Activated naive CD4-positive, alpha-beta T cell treated with anti-CD3 and anti-CD28 coated beads for 36 hours (primary cell): ENCODE measurements at regions of chr16 and their contacts with region 1.

Region 1: GRCh38 chr16:30957456-30958174 is at the start of gene SETD1A:
- DNase-seq: peak; percentile 99
- H3K4me3 Mint-ChIP-seq: peak within 1 kb of the TSS; percentile 93
- H3K27ac Mint-ChIP-seq: peak within 1 kb of the TSS; percentile 99
- H3K4me1 Mint-ChIP-seq: peaks cover 27% of the 10 kb centered on the region
- H3K27me3 Mint-ChIP-seq: no peaks in the 10 kb centered on the region
- total RNA-seq, gene SETD1A: 14.3 to 14.6 TPM

Region 2: DNA sequence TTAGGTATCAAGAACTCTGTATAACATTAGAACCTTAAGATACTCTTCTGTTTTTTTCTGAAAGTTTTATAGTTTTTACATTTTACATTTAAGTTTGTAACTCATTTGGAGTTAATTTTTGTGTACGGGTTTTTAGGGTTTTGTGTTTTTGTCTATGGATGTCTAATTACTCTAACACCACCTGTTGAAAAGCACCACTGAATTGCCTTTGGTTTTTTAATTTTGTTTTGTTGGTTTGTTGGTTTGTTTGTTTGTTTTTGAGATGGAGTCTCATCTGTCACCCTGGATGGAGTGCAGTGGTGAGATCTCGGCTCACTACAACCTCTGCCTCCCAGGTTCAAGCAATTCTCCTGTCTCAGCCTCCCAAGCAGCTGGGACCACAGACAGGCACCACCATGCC is 140.8 kb before region 1 on chr16:
- CTCF ChIA-PET with region 1: no interaction called
- intact Hi-C with region 1: no loop called
- DNase-seq: no peak
- H3K4me3 Mint-ChIP-seq: no peak overlapping the region
- H3K27ac Mint-ChIP-seq: no peak overlapping the region
- H3K4me1 Mint-ChIP-seq: peaks cover 14% of the 10 kb centered on the region
- H3K27me3 Mint-ChIP-seq: no peaks in the 10 kb centered on the region

Region 3: GRCh38 chr16:30934827-30935557 is 22.6 kb before region 1 on chr16:
- CTCF ChIA-PET with region 1: interaction called, 18 read pairs
- intact Hi-C with region 1: no loop called
- DNase-seq: peak; percentile 67
- H3K4me3 Mint-ChIP-seq: no peak overlapping the region
- H3K27ac Mint-ChIP-seq: no peak overlapping the region
- H3K4me1 Mint-ChIP-seq: peaks cover 11% of the 10 kb centered on the region
- H3K27me3 Mint-ChIP-seq: no peaks in the 10 kb centered on the region

Region 4: GRCh38 chr16:30941600-30942425 is 15.8 kb before region 1 on chr16:
- CTCF ChIA-PET with region 1: interaction called, 33 read pairs
- intact Hi-C with region 1: no loop called
- DNase-seq: peak; percentile 79
- H3K4me3 Mint-ChIP-seq: no peak overlapping the region
- H3K27ac Mint-ChIP-seq: peak overlapping the region; percentile 51
- H3K4me1 Mint-ChIP-seq: peaks cover 21% of the 10 kb centered on the region
- H3K27me3 Mint-ChIP-seq: no peaks in the 10 kb centered on the region

Region 5: GRCh38 chr16:31032736-31033708 is 75.4 kb after region 1 on chr16 and contains the start of gene STX4:
- CTCF ChIA-PET with region 1: no interaction called
- intact Hi-C with region 1: loop called (anchors 1 kb)
- DNase-seq: peak; percentile 99
- H3K4me3 Mint-ChIP-seq: peak within 1 kb of the TSS; percentile 96
- H3K27ac Mint-ChIP-seq: peak within 1 kb of the TSS; percentile 93
- H3K4me1 Mint-ChIP-seq: peaks cover 22% of the 10 kb centered on the region
- H3K27me3 Mint-ChIP-seq: no peaks in the 10 kb centered on the region
- total RNA-seq, gene STX4: 32.9 to 38.0 TPM

Region 6: DNA sequence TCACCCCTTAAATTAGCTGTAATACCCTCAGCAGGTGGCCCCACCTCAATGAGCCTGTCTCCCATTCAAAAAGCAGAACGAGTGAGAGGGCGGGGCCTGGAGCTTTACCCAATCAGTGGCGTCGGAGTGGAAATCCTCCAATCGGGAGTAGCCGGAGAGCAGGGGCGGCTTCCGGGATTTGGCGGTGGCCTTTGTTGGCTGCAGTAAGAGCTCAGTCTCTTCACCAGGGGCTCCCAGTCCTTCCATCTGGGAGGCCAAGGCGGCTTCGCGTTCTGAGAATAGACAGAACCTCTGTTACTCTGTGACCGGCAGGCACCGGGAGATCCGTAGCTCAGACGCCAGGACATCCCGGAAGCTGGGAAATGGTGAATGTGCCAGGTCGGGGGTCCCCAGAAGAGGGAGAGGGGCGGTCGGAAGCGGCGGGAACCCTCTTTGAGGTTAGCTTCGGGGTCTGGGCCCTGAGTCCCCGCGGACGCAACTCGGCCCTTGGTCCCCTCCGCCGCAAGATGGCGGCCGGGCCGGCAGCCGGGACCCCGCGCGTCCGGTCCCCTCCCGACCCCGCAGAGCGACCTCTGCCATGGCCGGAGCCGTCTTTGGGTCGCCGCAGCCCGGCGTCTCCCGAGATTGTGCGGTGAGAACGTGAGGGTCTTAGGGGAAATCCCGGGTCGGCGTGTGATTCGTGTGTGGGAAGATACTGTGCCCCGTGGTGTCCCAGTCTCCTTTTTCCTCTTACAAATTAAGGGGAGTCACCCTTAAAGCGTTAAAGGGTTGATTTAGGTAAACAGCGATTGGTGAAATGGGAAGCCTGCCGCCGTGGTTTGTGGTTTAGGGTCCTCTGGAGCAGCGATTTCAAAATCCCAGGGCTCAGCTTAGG is 755.7 kb after region 1 on chr16:
- CTCF ChIA-PET with region 1: no interaction called
- intact Hi-C with region 1: loop called (anchors 10 kb)
- DNase-seq: peak; percentile 97
- H3K4me3 Mint-ChIP-seq: peak overlapping the region; percentile 97
- H3K27ac Mint-ChIP-seq: peak overlapping the region; percentile 97
- H3K4me1 Mint-ChIP-seq: peaks cover 44% of the 10 kb centered on the region
- H3K27me3 Mint-ChIP-seq: no peaks in the 10 kb centered on the region

Region 7: GRCh38 chr16:31873556-31874365 is 916.1 kb after region 1 on chr16 and contains the start of gene ZNF267:
- CTCF ChIA-PET with region 1: no interaction called
- intact Hi-C with region 1: loop called (anchors 2 kb)
- DNase-seq: peak; percentile 97
- H3K4me3 Mint-ChIP-seq: peak within 1 kb of the TSS; percentile 88
- H3K27ac Mint-ChIP-seq: peak within 1 kb of the TSS; percentile 96
- H3K4me1 Mint-ChIP-seq: peaks cover 79% of the 10 kb centered on the region
- H3K27me3 Mint-ChIP-seq: no peaks in the 10 kb centered on the region
- total RNA-seq, gene ZNF267: 58.7 to 59.7 TPM